Panc1 (cell line): ENCODE measurements at regions of chr6 and their contacts with region 1.

Region 1: GRCh38 chr6:108592371-108593337 is 31.9 kb downstream of the FOXO3 start:
- DNase-seq: no peak
- ATAC-seq: no peak
- H3K4me3 ChIP-seq: no peak overlapping the region
- H3K27ac ChIP-seq: no peak overlapping the region
- H3K4me1 ChIP-seq: peaks cover 40% of the 10 kb centered on the region
- H3K27me3 ChIP-seq: no peaks in the 10 kb centered on the region
- CTCF ChIP-seq: no peak

Region 2: DNA sequence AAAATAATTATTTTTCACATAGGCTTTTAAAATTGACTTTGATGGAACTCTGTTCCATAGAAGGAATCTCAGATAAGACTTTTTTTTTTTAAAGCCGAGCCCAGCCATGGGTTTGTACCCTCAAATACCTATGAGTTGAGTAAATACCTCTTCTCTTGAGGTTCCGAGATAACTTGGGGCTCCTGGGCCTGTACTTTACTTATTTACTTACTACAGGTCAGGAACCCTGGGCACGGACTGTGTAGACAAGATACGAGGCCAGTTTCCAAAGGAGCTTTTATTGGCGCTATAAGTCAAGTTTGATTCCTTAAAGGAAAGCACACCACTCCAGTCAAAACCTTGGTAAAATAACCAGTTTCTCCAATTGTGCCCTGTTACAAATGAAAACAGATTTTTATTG is 290.3 kb before region 1 on chr6:
- CTCF ChIA-PET with region 1: no interaction called
- POLR2A ChIA-PET with region 1: interaction called, 14 read pairs
- in situ Hi-C with region 1: no loop called
- intact Hi-C with region 1: no loop called
- DNase-seq: no peak
- ATAC-seq: no peak
- H3K4me3 ChIP-seq: no peak overlapping the region
- H3K27ac ChIP-seq: no peak overlapping the region
- H3K4me1 ChIP-seq: no peaks in the 10 kb centered on the region
- H3K27me3 ChIP-seq: no peaks in the 10 kb centered on the region
- CTCF ChIP-seq: no peak

Region 3: DNA sequence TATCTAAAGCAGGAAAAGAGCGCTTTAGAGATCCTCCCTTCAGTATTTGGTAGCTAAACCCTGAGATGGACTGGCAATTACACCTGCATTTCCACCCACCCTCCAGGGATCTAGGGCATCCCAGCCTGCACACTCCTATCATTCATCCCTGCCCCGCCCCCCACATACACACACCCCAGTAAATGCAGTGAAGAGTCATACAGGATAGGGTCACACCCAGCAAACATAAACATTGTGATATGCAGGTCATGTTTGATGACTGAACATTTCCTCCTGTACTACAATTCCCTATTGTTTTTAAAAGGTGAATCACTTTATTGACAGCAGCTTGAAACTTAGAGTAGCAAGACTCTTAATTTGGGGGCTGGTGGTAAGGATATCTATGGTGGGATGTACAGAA is 80.9 kb after region 1 on chr6:
- CTCF ChIA-PET with region 1: no interaction called
- POLR2A ChIA-PET with region 1: no interaction called
- in situ Hi-C with region 1: no loop called
- intact Hi-C with region 1: loop called (anchors 5 kb)
- DNase-seq: peak; percentile 71
- ATAC-seq: peak; percentile 73
- H3K4me3 ChIP-seq: no peak overlapping the region
- H3K27ac ChIP-seq: no peak overlapping the region
- H3K4me1 ChIP-seq: peaks cover 41% of the 10 kb centered on the region
- H3K27me3 ChIP-seq: no peaks in the 10 kb centered on the region
- CTCF ChIP-seq: no peak